Dendritic cell treated with granulocyte-macrophage colony-stimulating factor and Interleukin-4, amounts not matched to agents 40 ng/mL and 50 ng/mL, for 4 days (primary cell): ENCODE measurements at regions of chr12 and their contacts with region 1.

Region 1: DNA sequence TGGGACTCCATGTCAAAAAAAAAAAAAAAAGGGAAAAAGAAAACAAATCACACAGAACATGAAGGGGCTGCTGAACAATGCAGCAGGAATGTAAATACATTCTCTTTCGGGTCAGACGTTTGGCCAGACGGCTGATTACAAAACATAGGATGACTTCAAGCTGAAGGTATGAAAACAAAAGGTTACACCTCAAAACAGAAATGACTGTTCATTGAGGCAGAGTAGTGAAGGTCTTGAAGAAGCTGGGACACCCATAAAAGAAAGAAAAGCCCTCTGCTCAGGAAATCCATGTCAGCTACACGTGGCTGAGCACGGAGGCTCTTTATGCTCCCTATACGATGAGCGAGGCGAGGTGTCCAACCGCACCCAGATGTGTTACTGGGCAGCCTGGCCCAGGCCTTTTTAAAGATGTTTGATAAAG is 37.7 kb downstream of the FGD4 start:
- H3K4me3 Mint-ChIP-seq: no peak overlapping the region
- H3K27ac Mint-ChIP-seq: no peak overlapping the region
- H3K4me1 Mint-ChIP-seq: no peaks in the 10 kb centered on the region
- H3K27me3 Mint-ChIP-seq: no peaks in the 10 kb centered on the region

Region 2: DNA sequence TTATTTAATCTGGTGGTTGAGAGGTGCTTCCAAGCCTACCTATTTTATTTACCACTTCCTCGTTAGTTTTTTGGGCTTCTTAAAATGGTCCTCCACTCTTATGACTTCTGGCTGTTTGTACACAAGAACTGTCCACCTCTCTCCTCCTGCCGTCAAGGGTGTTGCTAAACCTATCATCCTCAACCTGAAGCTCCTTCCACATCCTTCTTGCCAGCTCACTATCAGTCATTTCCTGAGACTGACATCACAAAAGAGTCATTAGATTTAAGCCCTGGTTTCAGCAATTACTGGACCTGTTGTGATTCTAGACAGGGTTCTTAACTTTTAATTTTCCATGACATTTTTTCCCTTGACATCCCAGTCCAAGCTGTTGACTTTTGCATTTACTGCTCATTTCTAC is 238.6 kb before region 1 on chr12:
- intact Hi-C with region 1: no loop called
- H3K4me3 Mint-ChIP-seq: no peak overlapping the region
- H3K27ac Mint-ChIP-seq: no peak overlapping the region
- H3K4me1 Mint-ChIP-seq: peaks cover 5% of the 10 kb centered on the region
- H3K27me3 Mint-ChIP-seq: no peaks in the 10 kb centered on the region

Region 3: DNA sequence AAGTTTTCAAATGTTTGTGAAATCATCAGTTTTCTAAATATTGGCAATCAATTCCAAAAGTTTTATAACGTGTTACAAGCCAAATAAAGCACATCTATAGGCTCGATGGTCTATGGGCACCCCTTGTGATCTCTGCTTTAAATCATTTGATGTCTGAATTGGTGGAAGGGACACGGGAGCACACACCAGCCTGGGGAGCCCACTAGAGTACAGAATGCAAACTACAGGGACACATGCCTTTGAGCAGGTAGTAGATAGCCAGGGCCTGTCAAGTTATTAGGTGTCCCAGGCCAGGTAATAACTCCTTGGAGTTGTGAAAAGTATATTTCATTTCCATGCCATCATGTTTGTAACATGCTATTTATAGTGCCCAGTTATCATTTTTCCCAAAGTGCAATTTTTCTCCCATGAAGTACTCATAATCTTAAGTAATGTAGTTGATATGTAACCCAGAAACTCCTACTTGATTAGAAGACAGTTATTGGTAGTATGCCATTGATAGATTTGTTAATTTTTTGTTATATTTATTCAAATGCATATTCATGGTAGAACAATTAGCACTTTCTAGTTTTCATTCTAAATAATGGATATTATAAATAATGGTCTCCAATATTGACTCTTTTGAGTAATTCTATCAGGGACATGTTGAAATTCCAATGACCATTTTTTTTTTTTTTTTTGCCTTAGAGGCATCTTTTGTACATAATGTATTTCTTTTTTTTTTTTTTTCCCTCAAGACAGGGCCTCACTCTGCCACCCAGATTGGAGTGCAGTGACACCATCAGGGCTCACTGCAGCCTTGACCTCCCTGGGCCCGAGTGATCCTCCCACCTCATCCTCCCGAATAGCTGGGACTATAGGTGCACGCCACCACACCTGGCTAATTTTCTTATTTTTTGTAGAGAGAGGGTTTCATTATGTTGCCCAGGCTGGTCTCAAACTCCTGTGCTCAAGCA is 134.6 kb before region 1 on chr12:
- intact Hi-C with region 1: no loop called
- H3K4me3 Mint-ChIP-seq: no peak overlapping the region
- H3K27ac Mint-ChIP-seq: no peak overlapping the region
- H3K4me1 Mint-ChIP-seq: no peaks in the 10 kb centered on the region
- H3K27me3 Mint-ChIP-seq: no peaks in the 10 kb centered on the region

Region 4: GRCh38 chr12:32377344-32378055 is 59.6 kb before region 1 on chr12:
- intact Hi-C with region 1: loop called (anchors 10 kb)
- H3K4me3 Mint-ChIP-seq: no peak overlapping the region
- H3K27ac Mint-ChIP-seq: no peak overlapping the region
- H3K4me1 Mint-ChIP-seq: peaks cover 14% of the 10 kb centered on the region
- H3K27me3 Mint-ChIP-seq: no peaks in the 10 kb centered on the region

Region 5: GRCh38 chr12:32483499-32483898 is 46.4 kb after region 1 on chr12:
- intact Hi-C with region 1: no loop called
- H3K4me3 Mint-ChIP-seq: no peak overlapping the region
- H3K27ac Mint-ChIP-seq: peak overlapping the region; percentile 94
- H3K4me1 Mint-ChIP-seq: peaks cover 51% of the 10 kb centered on the region
- H3K27me3 Mint-ChIP-seq: no peaks in the 10 kb centered on the region